Right cardiac atrium (tissue), 5 donors: ENCODE measurements at regions of chrX and their contacts with region 1.

Region 1: GRCh38 chrX:8724300-8724699 is 7.6 kb downstream of the ANOS1 start:
- DNase-seq: no peak
- ATAC-seq: peak in 1 of 2 donors; percentile 75
- H3K4me3 ChIP-seq: no peak overlapping the region
- H3K27ac ChIP-seq: no peak overlapping the region
- H3K4me1 ChIP-seq: no peaks in the 10 kb centered on the region
- H3K27me3 ChIP-seq: no peaks in the 10 kb centered on the region

Region 2: DNA sequence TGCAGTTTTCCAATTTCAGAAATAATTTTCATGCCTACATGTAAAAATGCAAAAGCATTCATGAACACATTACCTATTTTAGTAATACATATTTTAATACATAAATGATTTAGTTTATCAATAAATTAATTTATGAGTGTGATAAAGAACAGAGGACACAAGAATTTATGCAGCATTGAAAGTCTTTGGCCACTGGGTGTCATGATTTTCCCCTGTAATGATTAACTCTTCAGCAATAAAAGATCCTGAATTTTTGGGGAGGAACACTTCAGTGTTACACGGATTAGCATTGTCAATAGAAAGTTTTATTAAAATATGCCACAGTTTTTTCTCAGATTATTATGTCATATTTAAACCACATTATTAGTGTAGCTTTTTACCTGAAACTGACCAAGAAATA is 544.6 kb before region 1 on chrX:
- intact Hi-C with region 1: loop called in 1 of 4 experiments (anchors 10 kb)
- DNase-seq: no peak
- ATAC-seq: no peak
- H3K4me3 ChIP-seq: no peak overlapping the region
- H3K27ac ChIP-seq: no peak overlapping the region
- H3K4me1 ChIP-seq: no peaks in the 10 kb centered on the region
- H3K27me3 ChIP-seq: no peaks in the 10 kb centered on the region